ENCODE measurements at regions of chr11 and their contacts with region 1.

Region 1: DNA sequence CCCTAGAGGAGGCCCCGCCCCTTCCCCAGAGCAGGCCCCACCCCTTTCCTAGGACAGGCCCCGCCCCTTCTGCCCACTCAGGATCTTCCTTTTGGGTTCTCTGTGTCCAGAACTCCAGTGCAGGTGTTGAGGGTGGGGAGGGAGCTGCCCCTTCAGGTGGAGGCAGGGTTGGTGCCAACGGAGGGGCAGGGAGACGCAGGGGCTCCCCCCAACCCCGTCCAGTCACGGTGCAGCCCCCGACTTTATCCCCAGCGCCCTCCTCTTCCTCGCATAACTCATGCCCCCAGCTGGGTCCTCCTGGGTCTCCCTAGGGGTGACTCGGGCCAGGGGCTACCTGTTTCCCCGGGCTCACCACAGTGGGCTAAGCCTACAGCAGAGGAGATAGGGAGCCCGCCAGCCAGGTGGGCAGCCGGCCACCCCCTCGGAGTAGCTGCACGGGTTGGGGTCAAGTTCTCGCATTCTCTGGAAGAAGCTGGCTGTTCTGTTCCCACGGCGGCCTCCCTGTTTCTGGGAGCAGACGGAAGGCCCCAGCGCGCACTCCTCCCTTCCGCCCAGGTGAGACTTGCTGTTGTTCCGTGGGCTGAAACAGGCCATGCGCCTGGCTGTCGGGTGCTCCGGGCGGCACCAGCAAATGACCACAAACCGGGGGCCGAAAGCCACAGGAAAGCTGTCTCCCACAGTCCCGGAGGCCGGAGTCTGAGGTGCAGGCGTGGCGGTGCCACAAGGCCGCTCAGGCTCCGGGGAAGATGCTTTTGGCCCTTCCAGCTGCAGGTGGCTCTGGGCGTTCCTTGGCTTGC is 38.9 kb downstream of the MUC2 start:
- DNase-seq: no peak
- H3K4me3 Mint-ChIP-seq: no peak overlapping the region
- H3K27ac Mint-ChIP-seq: no peak overlapping the region
- H3K4me1 Mint-ChIP-seq: peaks cover 6% of the 10 kb centered on the region
- H3K27me3 Mint-ChIP-seq: peaks cover 23% of the 10 kb centered on the region
- CTCF ChIP-seq: no peak

Region 2: DNA sequence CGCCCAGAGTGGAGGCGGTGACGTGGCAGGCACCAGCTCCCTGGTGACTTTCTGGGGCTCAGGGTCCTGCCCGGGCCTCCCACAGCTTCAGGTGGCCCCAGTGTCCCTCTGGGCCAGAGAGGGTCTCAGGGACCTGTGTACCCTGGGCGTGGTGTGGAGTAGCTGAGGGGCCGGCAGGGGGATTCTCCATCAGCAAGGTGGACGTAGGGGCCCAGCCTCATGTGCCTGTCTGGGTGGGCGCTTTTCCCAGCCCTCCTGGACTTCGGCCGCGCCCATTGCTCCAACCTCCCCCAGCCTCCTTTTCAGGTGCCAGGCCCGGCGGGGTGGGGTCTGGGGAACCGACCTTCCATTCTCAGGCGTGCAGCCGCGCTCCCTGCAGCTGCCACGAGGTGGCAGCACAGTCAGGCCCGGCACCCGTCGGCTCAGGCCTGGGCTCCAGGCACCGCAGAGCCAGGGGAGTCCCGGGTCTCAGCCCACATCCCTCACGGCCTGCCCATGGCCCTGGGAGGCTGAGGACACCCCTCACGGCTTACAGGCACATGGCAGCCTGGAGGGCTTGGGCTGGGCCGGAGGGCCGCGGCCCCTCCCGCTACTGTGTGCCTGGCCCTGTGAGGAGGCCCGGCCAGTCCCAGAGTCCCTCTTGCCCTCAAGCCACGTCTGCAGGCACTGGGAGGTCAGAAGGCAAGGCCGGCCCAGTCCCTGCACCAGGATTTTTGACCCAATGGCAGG is 89.3 kb after region 1 on chr11:
- CTCF ChIA-PET with region 1: no interaction called
- POLR2A ChIA-PET with region 1: no interaction called
- intact Hi-C with region 1: loop called (anchors 10 kb)
- DNase-seq: peak; percentile 59
- H3K4me3 Mint-ChIP-seq: no peak overlapping the region
- H3K27ac Mint-ChIP-seq: no peak overlapping the region
- H3K4me1 Mint-ChIP-seq: no peaks in the 10 kb centered on the region
- H3K27me3 Mint-ChIP-seq: no peaks in the 10 kb centered on the region
- CTCF ChIP-seq: peak; percentile 87